ENCODE measurements at regions of chr6 and their contacts with region 1.

Region 1: GRCh38 chr6:87066449-87067333 is 28.2 kb downstream of the CGA start:
- DNase-seq: peak; percentile 31 to 69 (median 40)
- ATAC-seq: 0 out of 3 replicates have a peak, but pooled peaks have one; percentile 40
- H3K4me3 ChIP-seq: no peak overlapping the region
- H3K27ac ChIP-seq: no peak overlapping the region
- H3K4me1 ChIP-seq: no peaks in the 10 kb centered on the region; a peak in 1 of 5 replicates
- H3K27me3 ChIP-seq: no peaks in the 10 kb centered on the region
- CTCF ChIP-seq: peak; percentile 50 to 86 (median 57); a peak in 5 of 6 replicates
- EP300 ChIP-seq: no peak
- POLR2A ChIP-seq: no peak
- RAD21 ChIP-seq: peak; percentile 69 to 86

Region 2: DNA sequence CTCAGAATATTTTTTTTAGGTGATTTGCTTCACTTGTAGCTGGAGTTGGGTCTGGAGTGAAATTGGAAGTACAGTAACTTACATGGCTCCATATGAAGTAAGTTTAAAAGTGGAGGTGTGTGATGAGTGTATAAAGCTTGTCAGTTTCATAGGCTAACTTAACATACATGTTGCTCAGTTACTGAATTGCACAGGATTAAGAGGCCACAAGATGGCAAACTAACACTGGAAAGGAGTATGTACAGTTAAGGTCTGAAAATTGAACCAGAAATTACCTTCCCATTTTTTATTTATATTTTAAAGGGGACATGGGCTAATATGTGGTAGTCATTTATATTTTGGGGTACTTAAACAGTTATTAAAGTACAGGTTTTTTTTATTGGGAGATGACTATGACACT is 210.4 kb after region 1 on chr6:
- CTCF ChIA-PET with region 1: no interaction called
- POLR2A ChIA-PET with region 1: no interaction called
- in situ Hi-C with region 1: no loop called
- intact Hi-C with region 1: loop called (anchors 2 kb)
- DNase-seq: peak in 2 of 4 experiments; percentile 25 to 55
- ATAC-seq: peak; percentile 94
- H3K4me3 ChIP-seq: no peak overlapping the region
- H3K27ac ChIP-seq: no peak overlapping the region
- H3K4me1 ChIP-seq: no peaks in the 10 kb centered on the region
- H3K27me3 ChIP-seq: peaks cover 3 to 5% of the 10 kb centered on the region in 2 experiments; a peak in 3 of 5 replicates
- CTCF ChIP-seq: peak; percentile 44 to 78 (median 55); a peak in 5 of 6 replicates
- EP300 ChIP-seq: no peak
- POLR2A ChIP-seq: no peak
- RAD21 ChIP-seq: peak; percentile 76 to 94

Measured in K562 (cell line).